Mammary epithelial cell (primary cell): ENCODE measurements at regions of chr5 and their contacts with region 1.

Region 1: DNA sequence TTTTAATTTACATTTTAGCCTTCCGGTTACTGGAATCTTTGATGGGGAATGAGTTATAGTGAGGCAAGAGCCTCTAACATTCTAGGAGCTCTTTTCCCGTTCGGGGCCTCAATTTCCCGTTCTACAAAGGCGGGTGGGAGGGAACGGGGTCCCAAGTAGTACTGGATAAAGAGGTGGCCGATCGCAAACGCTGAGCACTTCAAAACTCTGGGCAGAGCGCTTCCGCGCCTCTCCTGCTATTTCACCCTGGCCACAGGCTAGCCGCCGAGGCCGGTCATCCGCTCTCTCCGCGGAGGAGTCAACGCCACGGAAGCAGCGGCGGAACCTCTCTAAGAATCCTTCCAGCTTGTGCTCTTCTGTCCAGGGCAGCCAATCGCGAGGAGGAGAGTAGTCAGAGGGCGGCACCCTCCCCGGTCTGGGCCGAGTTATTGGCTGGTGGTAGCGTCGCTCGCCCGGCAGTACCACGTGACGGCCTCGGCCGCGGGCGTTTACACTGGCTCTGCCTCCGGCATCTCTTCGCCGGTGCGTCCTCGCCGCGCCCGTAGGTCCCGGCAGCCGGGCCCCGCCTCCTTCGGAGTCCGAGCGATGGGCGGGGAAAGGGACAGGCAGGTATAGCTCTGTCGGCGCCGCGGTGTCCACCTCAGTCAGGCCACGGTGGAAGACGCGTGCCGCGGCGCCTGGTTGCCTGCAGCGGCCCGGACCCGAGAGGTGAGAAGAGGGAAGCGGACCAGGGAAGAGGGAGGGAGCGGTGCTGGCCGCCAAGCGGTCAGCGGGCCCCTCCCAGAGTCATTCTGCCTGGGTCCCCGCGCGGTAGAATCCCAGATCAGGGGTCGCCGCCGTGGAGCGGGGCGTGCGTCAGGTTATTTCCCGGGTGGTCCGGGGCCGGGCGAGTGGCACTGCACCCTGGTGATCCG is at the start of gene SLC26A2:
- DNase-seq: peak; percentile 98
- H3K4me3 ChIP-seq: peak within 1 kb of the TSS; percentile 58 to 78 (median 74)
- H3K27ac ChIP-seq: peak within 1 kb of the TSS; percentile 75
- H3K4me1 ChIP-seq: peaks cover 23% of the 10 kb centered on the region
- H3K27me3 ChIP-seq: no peaks in the 10 kb centered on the region
- CTCF ChIP-seq: no peak
- total RNA-seq, gene SLC26A2: 18.1 to 63.2 TPM

Region 2: DNA sequence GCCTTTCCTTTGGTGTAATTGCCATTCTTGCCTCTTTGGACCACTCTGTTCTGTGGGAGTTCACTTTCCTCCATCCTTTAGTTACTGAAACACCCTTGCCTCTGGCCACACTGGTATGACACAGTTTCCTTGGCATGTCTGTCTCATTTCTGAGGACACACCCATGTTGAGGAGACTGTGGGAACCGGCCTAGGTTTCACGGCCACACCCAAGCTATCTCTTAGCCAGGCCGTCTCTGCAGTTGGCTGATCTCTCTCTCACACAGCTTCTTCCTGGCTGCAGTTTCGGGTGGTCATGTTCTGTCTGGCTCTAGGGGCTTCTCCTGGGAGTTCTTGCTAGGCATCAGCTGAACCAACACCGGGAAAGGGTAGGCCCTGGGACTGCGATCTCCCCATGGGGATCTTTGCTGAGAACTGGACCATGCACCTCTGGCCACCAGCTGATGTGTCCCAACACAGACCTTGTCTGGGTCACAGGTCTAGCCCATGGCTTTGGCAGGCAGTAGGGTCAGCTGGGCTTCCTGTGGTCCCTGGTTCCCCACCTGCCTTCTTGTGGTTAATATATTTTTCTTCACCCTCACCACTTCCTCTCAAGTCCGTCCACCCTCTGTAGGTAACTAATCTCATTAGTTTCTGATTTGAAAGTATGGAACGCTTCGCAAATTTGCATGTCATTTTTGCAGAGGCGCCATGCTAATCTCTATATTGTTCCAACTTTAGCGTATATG is 354.4 kb before region 1 on chr5:
- CTCF ChIA-PET with region 1: no interaction called
- dilution Hi-C with region 1: no loop called
- in situ Hi-C with region 1: no loop called
- intact Hi-C with region 1: no loop called
- DNase-seq: peak; percentile 99
- H3K4me3 ChIP-seq: no peak overlapping the region
- H3K27ac ChIP-seq: peak overlapping the region; percentile 99
- H3K4me1 ChIP-seq: peaks cover 27% of the 10 kb centered on the region
- H3K27me3 ChIP-seq: no peaks in the 10 kb centered on the region
- CTCF ChIP-seq: no peak

Region 3: DNA sequence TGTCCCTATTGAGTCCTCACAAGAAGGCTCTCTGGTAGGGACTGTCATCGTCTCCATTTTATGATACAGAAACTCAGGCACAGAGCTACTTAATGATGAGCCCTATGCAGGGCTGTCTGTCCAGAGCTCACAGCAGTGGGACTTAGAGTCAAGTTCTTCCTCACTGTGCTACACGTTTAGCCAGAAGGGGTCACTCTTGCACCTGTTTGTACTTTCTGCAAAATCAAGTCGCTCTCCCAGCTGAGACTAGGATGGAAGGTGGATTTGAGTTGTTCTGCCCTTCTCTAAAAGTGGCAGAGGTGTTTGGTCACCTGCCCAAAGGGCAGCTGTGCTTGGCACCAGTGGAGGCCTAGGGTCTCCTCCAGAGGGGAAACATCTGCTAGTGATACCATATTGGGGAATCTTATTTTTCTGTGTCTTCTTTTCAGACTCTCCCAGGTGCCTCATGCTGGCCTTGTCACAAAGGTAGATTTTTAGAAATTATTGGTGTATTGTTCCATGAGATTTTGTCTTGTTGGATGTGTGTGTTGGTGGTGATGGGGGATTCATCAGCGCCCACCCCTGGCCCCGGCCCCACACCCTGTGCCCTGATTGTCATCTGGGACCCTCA is 126.2 kb before region 1 on chr5:
- CTCF ChIA-PET with region 1: interaction called, 15 read pairs
- dilution Hi-C with region 1: no loop called
- in situ Hi-C with region 1: loop called in 1 of 2 experiments (anchors 5 kb)
- intact Hi-C with region 1: loop called (anchors 1 kb)
- DNase-seq: peak; percentile 62
- H3K4me3 ChIP-seq: no peak overlapping the region
- H3K27ac ChIP-seq: no peak overlapping the region
- H3K4me1 ChIP-seq: peaks cover 8% of the 10 kb centered on the region
- H3K27me3 ChIP-seq: no peaks in the 10 kb centered on the region
- CTCF ChIP-seq: peak; percentile 75 to 79

Region 4: GRCh38 chr5:149895416-149896345 is 64.8 kb before region 1 on chr5:
- CTCF ChIA-PET with region 1: interaction called, 5 read pairs
- dilution Hi-C with region 1: no loop called
- in situ Hi-C with region 1: no loop called
- intact Hi-C with region 1: loop called (anchors 5 kb)
- DNase-seq: peak; percentile 78
- H3K4me3 ChIP-seq: peak overlapping the region in 1 of 3 experiments; percentile 16
- H3K27ac ChIP-seq: peak overlapping the region; percentile 89
- H3K4me1 ChIP-seq: peaks cover 37% of the 10 kb centered on the region
- H3K27me3 ChIP-seq: no peaks in the 10 kb centered on the region
- CTCF ChIP-seq: no peak

Region 5: DNA sequence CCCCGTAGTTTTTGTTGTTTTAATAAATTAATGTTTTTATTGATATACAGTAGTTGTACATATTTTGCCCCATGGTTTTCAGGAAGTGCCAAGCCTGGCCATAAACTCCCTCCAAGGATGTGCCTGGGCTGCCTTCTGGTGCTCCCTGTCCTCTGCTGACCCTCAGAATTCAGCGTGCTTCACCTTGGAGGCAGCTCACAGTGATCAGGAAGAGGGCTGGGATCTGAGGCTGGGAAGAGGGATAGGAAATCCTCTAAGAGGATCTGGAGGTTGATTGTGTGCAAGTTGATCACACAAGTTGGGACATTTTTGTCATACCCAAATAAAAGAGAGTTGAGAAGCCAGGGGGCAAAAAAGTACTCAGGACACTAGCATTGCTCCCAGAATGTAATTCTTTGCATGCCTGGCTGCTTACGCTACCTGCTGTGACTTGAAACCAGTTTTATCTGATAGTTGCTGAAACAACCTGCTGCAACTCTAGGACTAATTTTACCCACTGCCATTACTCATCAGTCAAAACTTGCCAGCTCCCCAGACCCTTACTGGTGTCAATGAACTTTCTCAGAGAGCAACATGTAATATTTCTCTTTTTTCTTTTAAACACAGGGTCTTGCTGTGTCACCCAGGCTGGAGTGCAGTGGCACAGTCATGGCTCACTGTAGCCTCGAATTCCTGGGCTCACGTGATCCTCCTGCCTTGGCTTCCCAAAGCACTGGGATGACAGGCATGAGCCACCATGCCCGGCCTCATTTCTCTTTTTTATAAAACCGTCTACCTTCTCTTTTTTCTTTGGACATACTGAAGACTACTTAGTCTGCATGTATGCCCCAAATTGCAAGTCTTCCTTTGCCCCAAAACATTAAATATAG is 44.9 kb before region 1 on chr5:
- CTCF ChIA-PET with region 1: no interaction called
- dilution Hi-C with region 1: no loop called
- in situ Hi-C with region 1: no loop called
- intact Hi-C with region 1: loop called (anchors 1 kb)
- DNase-seq: peak; percentile 82
- H3K4me3 ChIP-seq: no peak overlapping the region
- H3K27ac ChIP-seq: peak overlapping the region; percentile 56
- H3K4me1 ChIP-seq: peaks cover 41% of the 10 kb centered on the region
- H3K27me3 ChIP-seq: no peaks in the 10 kb centered on the region
- CTCF ChIP-seq: peak in 1 of 2 donors; percentile 8

Region 6: DNA sequence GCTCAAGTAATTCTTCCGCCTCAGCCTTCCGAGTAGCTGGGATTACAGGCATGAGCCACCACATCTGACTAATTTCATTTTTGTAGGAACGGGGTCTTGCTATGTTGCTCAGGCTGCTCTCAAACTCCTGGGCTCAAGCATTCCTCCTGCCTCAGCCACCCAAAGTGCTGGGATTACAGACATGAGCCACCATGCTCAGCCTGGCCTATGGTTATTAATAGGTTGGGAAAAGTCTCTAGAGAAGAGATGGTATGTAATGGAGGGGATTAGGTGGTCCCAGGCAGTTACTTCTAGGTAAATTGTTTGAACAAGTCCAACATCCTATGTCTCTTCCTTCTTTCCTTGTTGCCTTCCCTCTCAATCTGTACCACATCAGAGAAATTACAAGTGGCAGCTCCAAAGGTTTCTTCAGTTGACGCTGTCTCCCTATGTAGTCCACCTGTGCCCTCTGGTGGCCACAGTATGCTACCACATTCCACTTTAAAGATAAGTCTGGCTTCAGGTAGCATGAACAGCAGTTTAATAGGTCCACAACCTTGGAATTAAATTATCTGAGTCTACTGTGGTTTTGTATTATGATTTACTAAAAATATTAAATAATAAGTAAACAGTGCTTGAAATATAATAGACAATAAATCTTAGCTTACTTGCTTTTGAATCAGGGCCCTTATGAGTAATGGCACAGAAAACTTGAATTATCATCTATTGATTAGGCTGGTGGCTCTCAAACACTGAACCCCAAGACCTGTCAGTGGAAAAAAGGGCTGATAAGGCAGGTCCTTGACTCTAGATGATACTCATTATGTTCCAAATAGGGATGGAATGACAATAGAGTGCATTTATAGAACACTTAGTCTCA is 30.2 kb after region 1 on chr5:
- CTCF ChIA-PET with region 1: interaction called, 3 read pairs
- dilution Hi-C with region 1: no loop called
- in situ Hi-C with region 1: no loop called
- intact Hi-C with region 1: loop called (anchors 1 kb)
- DNase-seq: peak; percentile 57
- H3K4me3 ChIP-seq: no peak overlapping the region
- H3K27ac ChIP-seq: no peak overlapping the region
- H3K4me1 ChIP-seq: no peaks in the 10 kb centered on the region
- H3K27me3 ChIP-seq: no peaks in the 10 kb centered on the region
- CTCF ChIP-seq: peak; percentile 96 to 97